CD4-positive, alpha-beta memory T cell (primary cell): ENCODE measurements at regions of chrX and their contacts with region 1.

Region 1: DNA sequence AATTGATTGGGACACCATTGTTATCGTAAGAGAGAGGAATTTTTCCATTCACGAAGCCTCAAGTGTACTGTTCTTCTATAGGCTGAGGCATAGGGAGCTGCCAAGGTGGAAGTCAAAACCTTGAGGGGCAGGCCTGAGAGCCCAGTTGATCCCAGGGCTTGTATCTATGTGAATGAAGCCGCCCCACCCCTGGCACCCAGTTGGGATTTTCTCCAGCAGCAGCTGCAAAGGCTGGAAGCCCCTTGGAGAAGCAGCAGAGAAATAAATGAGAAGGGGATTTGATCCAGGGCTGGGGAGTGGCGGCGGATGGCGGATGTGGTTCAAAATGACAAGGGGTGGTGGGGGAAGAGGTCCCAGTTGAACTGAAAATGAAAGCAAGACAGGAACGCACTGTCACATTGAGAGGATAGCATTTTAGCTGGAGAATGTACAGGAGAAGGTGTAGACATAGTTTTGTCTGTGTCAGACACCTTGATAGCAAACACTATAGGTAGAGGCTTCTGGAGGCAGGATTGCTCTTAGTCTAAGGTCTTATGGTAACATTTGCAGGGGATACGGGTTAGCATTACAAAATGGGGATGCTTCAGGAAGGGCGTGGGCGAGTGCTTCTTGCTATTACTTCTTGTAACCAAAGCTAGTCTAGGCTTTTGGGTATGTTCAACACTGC is 32.6 kb downstream of the DOCK11 start:
- DNase-seq: peak; percentile 63 to 77 (median 70)
- H3K4me3 ChIP-seq: peak overlapping the region; percentile 49 to 53
- H3K4me3 Mint-ChIP-seq: peak overlapping the region; percentile 75 to 97 (median 94)
- H3K27ac ChIP-seq: peak overlapping the region; percentile 78
- H3K27ac Mint-ChIP-seq: peak overlapping the region; percentile 87 to 99 (median 95)
- H3K4me1 ChIP-seq: peaks cover 85% of the 10 kb centered on the region
- H3K4me1 Mint-ChIP-seq: peaks cover 47 to 86% (median 68%) of the 10 kb centered on the region in 4 donors
- H3K27me3 ChIP-seq: no peaks in the 10 kb centered on the region
- H3K27me3 Mint-ChIP-seq: no peaks in the 10 kb centered on the region

Region 2: DNA sequence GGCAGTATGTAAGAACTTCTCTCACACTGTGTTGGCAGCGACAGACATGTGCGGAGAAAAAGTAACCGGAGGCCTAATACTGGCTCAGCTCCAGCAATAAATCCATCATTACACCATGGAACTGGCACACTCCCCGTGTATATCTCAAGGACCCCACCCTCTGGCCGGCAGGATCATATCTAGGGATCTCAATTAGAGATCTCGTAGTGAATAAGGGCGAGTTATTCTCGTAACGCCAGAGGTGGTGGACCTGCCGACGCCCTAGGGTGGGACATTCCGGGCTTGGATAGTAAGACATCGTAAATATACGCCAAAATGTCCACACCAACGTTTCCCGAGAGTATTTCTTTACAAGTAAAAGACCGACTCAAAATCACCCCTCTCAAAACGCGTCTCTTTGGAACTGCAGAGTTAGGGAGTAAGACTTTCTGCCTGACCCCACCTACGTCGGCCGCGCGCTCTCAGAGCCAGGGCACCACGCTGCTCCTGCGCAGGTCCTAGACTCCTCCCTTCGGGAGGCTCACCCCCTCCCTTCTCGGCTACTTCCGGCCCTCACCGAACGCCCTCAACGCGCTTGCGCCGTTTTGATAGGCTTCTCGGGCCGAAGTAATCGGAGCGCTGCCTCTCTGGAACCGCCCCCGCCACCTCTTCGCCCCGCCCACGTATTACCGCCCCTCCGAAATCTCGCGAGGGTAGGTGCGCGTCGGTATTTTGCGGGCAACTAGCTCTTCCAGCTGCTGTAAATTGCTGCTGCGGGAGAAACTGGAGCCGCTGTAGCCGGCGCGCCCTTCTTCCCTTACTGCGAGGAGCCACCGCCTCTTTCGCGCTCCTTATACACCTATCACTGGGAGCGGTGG is 182.6 kb before region 1 on chrX and contains the start of gene WDR44:
- CTCF ChIA-PET with region 1: no interaction called
- POLR2A ChIA-PET with region 1: interaction called, 9 read pairs
- intact Hi-C with region 1: loop called (anchors 10 kb)
- DNase-seq: peak; percentile 88 to 95 (median 94)
- H3K4me3 ChIP-seq: peak within 1 kb of the TSS; percentile 76 to 85
- H3K4me3 Mint-ChIP-seq: peak within 1 kb of the TSS; percentile 97 to 100 (median 99)
- H3K27ac ChIP-seq: peak within 1 kb of the TSS; percentile 84
- H3K27ac Mint-ChIP-seq: peak within 1 kb of the TSS; percentile 97 to 100 (median 98)
- H3K4me1 ChIP-seq: peaks cover 38% of the 10 kb centered on the region
- H3K4me1 Mint-ChIP-seq: peaks cover 16 to 51% (median 27%) of the 10 kb centered on the region in 4 donors
- H3K27me3 ChIP-seq: no peaks in the 10 kb centered on the region
- H3K27me3 Mint-ChIP-seq: no peaks in the 10 kb centered on the region
- total RNA-seq, gene WDR44: 20.5 to 24.1 TPM